A549 (cell line): ENCODE measurements at regions of chr1 and their contacts with region 1.

Region 1: GRCh38 chr1:17502326-17502778 is 37.1 kb upstream of the ARHGEF10L start:
- DNase-seq: peak; percentile 50 to 68
- ATAC-seq: peak; percentile 94 to 99
- H3K4me3 ChIP-seq: no peak overlapping the region
- H3K27ac ChIP-seq: no peak overlapping the region
- H3K4me1 ChIP-seq: peaks cover 17% of the 10 kb centered on the region; the same call in 2 of the 3 replicates
- CTCF ChIP-seq: peak; percentile 71
- EP300 ChIP-seq: no peak
- POLR2A ChIP-seq: no peak
- RAD21 ChIP-seq: peak; percentile 76 to 77

Region 2: GRCh38 chr1:17520071-17520813 is 17.9 kb after region 1 on chr1:
- CTCF ChIA-PET with region 1: interaction called, 16 read pairs
- POLR2A ChIA-PET with region 1: no interaction called
- DNase-seq: no peak
- ATAC-seq: no peak
- H3K4me3 ChIP-seq: no peak overlapping the region
- H3K27ac ChIP-seq: no peak overlapping the region
- H3K4me1 ChIP-seq: peaks cover 13% of the 10 kb centered on the region; the same call in 2 of the 3 replicates
- CTCF ChIP-seq: no peak
- EP300 ChIP-seq: no peak
- POLR2A ChIP-seq: no peak
- RAD21 ChIP-seq: no peak

Region 3: GRCh38 chr1:17553969-17554700 is 51.8 kb after region 1 on chr1:
- CTCF ChIA-PET with region 1: interaction called, 10 read pairs
- POLR2A ChIA-PET with region 1: no interaction called
- DNase-seq: peak in 1 of 2 experiments; percentile 45
- ATAC-seq: peak; percentile 49 to 81; a peak in 5 of 6 replicates
- H3K4me3 ChIP-seq: no peak overlapping the region
- H3K27ac ChIP-seq: peak overlapping the region; percentile 14 to 73; a peak in 4 of 6 replicates
- H3K4me1 ChIP-seq: peaks cover 41% of the 10 kb centered on the region
- CTCF ChIP-seq: no peak
- EP300 ChIP-seq: no peak
- POLR2A ChIP-seq: no peak
- RAD21 ChIP-seq: no peak

Region 4: GRCh38 chr1:17587989-17588685 is 85.8 kb after region 1 on chr1:
- CTCF ChIA-PET with region 1: interaction called, 17 read pairs
- POLR2A ChIA-PET with region 1: no interaction called
- DNase-seq: peak in 1 of 2 experiments; percentile 38
- ATAC-seq: peak; percentile 49 to 78; a peak in 5 of 6 replicates
- H3K4me3 ChIP-seq: peak overlapping the region; percentile 23; the same call in 1 of the 3 replicates
- H3K27ac ChIP-seq: peak overlapping the region; percentile 73 to 91
- H3K4me1 ChIP-seq: peaks cover 47% of the 10 kb centered on the region
- CTCF ChIP-seq: no peak
- EP300 ChIP-seq: no peak
- POLR2A ChIP-seq: no peak
- RAD21 ChIP-seq: no peak

Region 5: DNA sequence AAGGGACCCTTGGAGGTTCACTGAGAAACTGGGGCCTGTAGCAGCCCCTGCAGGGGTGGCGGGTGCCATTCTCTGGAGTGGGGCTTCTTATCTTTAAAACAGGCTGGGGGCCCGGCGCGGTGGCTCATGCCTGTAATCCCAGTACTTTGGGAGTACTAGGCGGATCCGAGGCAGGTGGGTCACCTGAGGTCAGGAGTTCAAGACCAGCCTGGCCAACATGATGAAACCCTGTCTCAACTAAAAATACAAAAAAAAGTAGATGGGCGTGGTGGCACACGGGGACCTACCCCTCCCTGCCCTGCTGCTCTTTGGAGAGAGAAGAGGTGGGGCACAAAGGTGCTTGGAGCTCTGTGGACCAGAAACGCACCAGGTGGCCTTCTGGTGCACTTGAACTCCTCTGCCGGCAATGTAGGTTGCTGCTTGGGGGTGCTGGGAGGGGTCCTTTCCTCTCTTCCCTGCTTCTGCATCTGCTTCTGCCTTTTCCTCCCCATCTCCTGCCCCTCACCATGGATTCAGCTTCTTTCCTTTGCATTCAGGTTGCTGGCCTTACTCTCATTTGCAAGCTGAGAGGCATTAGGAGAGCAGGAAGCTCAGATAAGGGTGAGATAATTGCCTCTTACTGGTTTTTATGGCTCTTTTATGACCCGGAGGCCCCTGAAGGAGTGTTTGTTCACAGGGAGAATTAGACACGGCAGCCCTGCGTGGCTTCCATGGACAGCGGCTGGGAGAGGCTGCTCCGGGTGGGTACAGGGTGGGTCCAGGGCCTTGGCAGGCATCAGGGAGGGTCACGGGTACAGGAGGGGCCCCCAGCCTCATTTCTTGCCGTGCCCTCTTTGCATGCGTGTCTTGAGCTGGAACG is 94.5 kb after region 1 on chr1:
- CTCF ChIA-PET with region 1: interaction called, 17 read pairs
- POLR2A ChIA-PET with region 1: no interaction called
- DNase-seq: no peak
- ATAC-seq: no peak
- H3K4me3 ChIP-seq: no peak overlapping the region
- H3K27ac ChIP-seq: no peak overlapping the region
- H3K4me1 ChIP-seq: 0 out of 3 replicates have a peak, but pooled peaks cover 5% of the 10 kb centered on the region
- CTCF ChIP-seq: no peak
- EP300 ChIP-seq: no peak
- POLR2A ChIP-seq: no peak
- RAD21 ChIP-seq: no peak

Region 6: GRCh38 chr1:17611975-17612374 is 109.6 kb after region 1 on chr1:
- CTCF ChIA-PET with region 1: interaction called, 129 read pairs
- POLR2A ChIA-PET with region 1: no interaction called
- DNase-seq: no peak
- ATAC-seq: no peak
- H3K4me3 ChIP-seq: no peak overlapping the region
- H3K27ac ChIP-seq: no peak overlapping the region
- H3K4me1 ChIP-seq: no peaks in the 10 kb centered on the region
- CTCF ChIP-seq: no peak
- EP300 ChIP-seq: no peak
- POLR2A ChIP-seq: no peak
- RAD21 ChIP-seq: no peak